ENCODE measurements at regions of chr18 and their contacts with region 1.

Region 1: GRCh38 chr18:44637210-44638051 is 43.3 kb upstream of the SETBP1 start:
- DNase-seq: peak; percentile 13 to 18
- ATAC-seq: peak; percentile 86 to 93 (median 88)
- H3K4me3 ChIP-seq: no peak overlapping the region
- H3K4me3 Mint-ChIP-seq: peak overlapping the region; percentile 83
- H3K27ac ChIP-seq: peak overlapping the region; percentile 39
- H3K27ac Mint-ChIP-seq: peak overlapping the region; percentile 84 to 86
- H3K4me1 ChIP-seq: peaks cover 20% of the 10 kb centered on the region
- H3K4me1 Mint-ChIP-seq: peaks cover 62 to 73% of the 10 kb centered on the region in 2 donors
- H3K27me3 ChIP-seq: no peaks in the 10 kb centered on the region
- H3K27me3 Mint-ChIP-seq: peaks cover 0 to 2% of the 10 kb centered on the region in 2 donors
- CTCF ChIP-seq: no peak

Region 2: GRCh38 chr18:43735570-43735969 is 901.9 kb before region 1 on chr18:
- intact Hi-C with region 1: no loop called
- DNase-seq: no peak
- ATAC-seq: no peak
- H3K4me3 ChIP-seq: no peak overlapping the region
- H3K4me3 Mint-ChIP-seq: no peak overlapping the region
- H3K27ac ChIP-seq: no peak overlapping the region
- H3K27ac Mint-ChIP-seq: no peak overlapping the region
- H3K4me1 ChIP-seq: no peaks in the 10 kb centered on the region
- H3K4me1 Mint-ChIP-seq: no peaks in the 10 kb centered on the region
- H3K27me3 ChIP-seq: no peaks in the 10 kb centered on the region
- H3K27me3 Mint-ChIP-seq: no peaks in the 10 kb centered on the region
- CTCF ChIP-seq: no peak

Region 3: DNA sequence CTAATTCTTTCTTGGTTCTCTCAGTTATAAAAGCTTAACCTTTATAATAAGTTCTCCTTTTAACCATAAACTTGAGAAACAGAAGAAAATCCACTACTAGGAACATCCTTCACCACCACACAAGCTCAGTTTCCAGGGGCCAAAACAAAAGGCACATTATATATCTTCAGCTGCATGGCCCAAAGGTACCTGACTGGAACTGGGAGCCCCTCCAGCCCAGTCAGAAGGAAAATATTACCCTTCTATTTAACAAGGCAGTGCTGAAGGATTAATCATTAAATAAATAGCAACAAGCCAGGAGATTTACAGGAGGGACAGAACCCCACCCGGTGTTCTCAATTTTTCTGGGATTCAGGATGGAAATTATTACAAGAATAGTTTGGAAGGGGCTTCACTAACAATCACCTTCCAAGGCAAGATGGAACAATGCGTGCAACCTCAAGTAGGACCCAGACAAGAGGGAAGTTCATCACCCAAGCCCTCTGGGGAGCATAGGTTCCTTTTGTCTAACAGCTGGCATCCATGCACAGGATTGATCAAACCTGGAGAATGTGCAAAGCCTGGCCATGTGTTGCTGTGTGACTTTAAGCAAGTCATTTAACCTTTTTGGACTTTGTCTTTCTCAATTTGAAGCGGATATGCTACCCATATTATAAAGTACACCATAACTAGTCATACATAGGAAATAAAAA is 116.3 kb before region 1 on chr18:
- intact Hi-C with region 1: loop called (anchors 10 kb)
- DNase-seq: no peak
- ATAC-seq: no peak
- H3K4me3 ChIP-seq: no peak overlapping the region
- H3K4me3 Mint-ChIP-seq: no peak overlapping the region
- H3K27ac ChIP-seq: no peak overlapping the region
- H3K27ac Mint-ChIP-seq: no peak overlapping the region
- H3K4me1 ChIP-seq: no peaks in the 10 kb centered on the region
- H3K4me1 Mint-ChIP-seq: peaks cover 1% of the 10 kb centered on the region in 2 donors
- H3K27me3 ChIP-seq: no peaks in the 10 kb centered on the region
- H3K27me3 Mint-ChIP-seq: peaks cover 0 to 6% of the 10 kb centered on the region in 2 donors
- CTCF ChIP-seq: no peak

Region 4: DNA sequence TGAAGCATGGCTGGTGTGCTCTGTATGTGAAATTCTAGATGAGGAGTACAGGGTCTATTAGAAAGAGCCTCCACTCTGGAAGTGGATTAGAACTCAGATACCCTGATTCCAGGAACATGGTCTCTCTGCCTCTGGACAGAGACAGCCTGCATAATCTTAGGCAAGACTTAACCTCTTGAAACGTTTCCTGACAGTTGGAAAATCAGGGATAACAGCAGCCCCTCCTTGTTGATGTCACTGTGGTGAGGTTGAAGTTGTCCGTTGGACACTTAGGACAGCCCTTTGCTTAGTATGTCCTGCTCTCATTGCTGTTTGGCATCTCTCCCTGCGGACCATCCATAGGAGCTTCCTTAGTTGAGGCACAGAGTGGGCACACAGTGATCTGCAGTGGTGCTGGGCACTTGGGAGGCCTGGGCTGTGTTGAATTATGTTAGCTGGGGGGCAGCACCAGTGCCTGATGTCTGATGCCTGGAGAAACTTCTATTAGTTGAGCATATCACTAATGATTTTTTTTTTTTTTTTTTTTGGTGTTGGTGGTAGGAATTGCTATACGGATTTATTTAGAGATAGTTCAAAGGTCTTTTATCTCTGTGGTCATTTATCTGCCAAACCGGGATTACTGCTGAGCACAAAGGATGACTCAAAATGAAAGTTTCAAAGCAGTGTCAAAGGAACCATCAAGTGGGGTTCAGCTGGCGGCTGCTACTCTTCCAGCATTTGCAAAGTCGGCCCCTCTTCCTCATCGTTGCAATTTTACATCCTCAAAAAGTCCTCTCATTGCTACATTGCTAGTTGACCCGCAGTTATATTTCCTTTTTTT is 72.1 kb after region 1 on chr18:
- intact Hi-C with region 1: no loop called
- DNase-seq: no peak
- ATAC-seq: no peak
- H3K4me3 ChIP-seq: no peak overlapping the region
- H3K4me3 Mint-ChIP-seq: no peak overlapping the region
- H3K27ac ChIP-seq: no peak overlapping the region
- H3K27ac Mint-ChIP-seq: peak overlapping the region in 1 of 2 donors; percentile 10
- H3K4me1 ChIP-seq: peaks cover 3% of the 10 kb centered on the region
- H3K4me1 Mint-ChIP-seq: peaks cover 24 to 25% of the 10 kb centered on the region in 2 donors
- H3K27me3 ChIP-seq: no peaks in the 10 kb centered on the region
- H3K27me3 Mint-ChIP-seq: no peaks in the 10 kb centered on the region
- CTCF ChIP-seq: no peak

Measured in natural killer cell (primary cell).